ENCODE measurements at regions of chr16 and their contacts with region 1.

Region 1: GRCh38 chr16:30984669-30985400 is at the start of gene HSD3B7:
- DNase-seq: peak in 1 of 2 donors; percentile 90
- H3K4me3 ChIP-seq: peak within 1 kb of the TSS; percentile 39 to 51
- H3K27ac ChIP-seq: peak within 1 kb of the TSS; percentile 15
- H3K4me1 ChIP-seq: peaks cover 13% of the 10 kb centered on the region
- H3K27me3 ChIP-seq: no peaks in the 10 kb centered on the region
- CTCF ChIP-seq: peak; percentile 90 to 96 (median 93)
- POLR2A ChIP-seq: no peak
- total RNA-seq, gene HSD3B7: 14.5 TPM

Region 2: DNA sequence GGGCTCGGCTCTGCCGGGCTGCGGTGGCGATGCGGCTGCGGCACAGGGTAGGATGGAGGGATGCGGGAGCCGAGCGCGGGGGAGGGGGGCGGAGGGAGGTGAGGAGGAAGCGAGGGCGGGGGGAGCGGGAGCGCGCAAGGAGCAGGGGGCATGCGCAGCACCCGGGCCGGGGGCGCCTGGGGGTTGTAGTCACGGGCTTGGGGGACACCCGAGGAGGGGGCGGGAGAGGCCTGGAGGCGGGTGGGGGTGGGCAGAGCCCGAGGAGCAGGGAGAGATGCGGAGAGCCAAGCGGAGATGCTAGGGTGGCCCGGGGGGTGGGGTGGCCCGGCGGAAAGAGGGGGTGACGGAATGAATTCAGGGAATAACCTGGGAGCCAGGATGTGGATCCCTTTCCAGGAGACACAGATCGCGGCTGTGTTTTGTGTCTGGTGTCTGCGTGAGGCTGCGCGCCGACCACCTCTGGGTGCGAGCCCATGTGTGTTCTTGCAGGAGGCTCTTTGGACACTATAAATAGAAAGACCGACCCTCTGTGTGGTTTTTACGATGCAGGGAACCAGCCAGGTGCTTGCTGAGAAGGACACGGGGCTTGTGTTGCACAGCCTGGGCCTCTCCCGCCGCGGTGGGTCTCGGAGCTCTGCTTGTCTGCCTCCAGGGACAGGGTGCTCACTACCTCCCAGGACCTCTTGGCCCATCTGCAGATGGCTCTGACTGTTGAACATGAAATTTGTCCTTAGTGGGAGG is 25.9 kb after region 1 on chr16 and contains the start of gene STX1B:
- intact Hi-C with region 1: no loop called
- DNase-seq: no peak
- H3K4me3 ChIP-seq: peak within 1 kb of the TSS in 1 of 2 donors; percentile 44
- H3K27ac ChIP-seq: no peak within 1 kb of the TSS
- H3K4me1 ChIP-seq: peaks cover 5% of the 10 kb centered on the region
- H3K27me3 ChIP-seq: no peaks in the 10 kb centered on the region
- CTCF ChIP-seq: no peak
- POLR2A ChIP-seq: no peak
- total RNA-seq, gene STX1B: 4.7 TPM

Region 3: GRCh38 chr16:31073968-31074813 is 89.4 kb after region 1 on chr16 and contains the starts of genes ZNF646 and ZNF668:
- intact Hi-C with region 1: loop called (anchors 10 kb)
- DNase-seq: peak in 1 of 2 donors; percentile 97
- H3K4me3 ChIP-seq: peak within 1 kb of the TSS; percentile 65 to 97
- H3K27ac ChIP-seq: peak within 1 kb of the TSS; percentile 94
- H3K4me1 ChIP-seq: peaks cover 31% of the 10 kb centered on the region
- H3K27me3 ChIP-seq: no peaks in the 10 kb centered on the region
- CTCF ChIP-seq: no peak
- POLR2A ChIP-seq: peak in 1 of 2 donors; percentile 56
- total RNA-seq, gene ZNF646: 10.6 TPM
- total RNA-seq, gene ZNF668: 5.4 TPM

Region 4: DNA sequence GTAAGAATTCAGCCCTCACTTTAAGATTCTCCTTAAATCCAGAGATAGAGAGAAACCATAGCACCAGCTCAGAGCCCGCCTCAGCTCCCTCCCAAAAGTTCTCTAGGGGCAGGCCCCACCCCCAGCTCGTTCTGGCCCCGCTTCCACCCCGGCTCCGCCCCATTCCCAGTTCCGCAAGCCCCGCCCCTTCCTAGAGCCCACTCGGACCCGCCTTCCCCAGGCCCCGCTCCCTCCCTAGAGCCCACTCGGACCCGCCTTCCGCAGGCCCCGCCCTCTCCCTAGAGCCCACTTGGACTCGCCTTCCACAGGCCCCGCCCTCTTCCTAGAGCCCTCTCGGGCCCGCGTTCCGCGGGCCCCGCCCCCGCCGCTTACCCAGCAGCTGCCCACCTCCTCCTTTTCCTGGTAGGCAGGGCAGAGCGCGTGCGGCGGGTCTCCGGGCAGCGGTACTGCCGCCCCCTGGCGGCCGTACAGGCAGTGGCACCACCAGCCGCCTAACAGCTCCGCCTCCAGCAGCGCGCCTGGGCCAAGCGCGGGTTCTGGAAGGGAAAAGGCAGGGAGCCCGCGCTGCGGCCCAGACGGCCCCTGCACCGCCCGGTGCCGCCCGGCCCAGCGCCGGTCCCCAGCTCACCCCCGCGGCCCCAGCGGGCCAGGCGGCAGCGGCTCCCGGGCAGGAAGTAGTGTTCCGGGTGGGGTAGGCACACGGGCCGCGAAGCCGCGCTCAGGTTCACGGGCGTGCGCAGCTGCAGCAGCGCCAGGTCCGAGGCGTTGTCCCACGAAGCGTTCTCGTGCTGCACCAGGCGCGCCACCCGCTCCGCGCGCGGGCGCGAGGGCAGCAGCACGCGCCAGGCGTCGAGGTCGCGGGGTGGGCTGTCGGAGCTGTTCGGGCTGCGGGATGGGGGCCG is 157.5 kb after region 1 on chr16:
- intact Hi-C with region 1: loop called (anchors 5 kb)
- DNase-seq: peak; percentile 99 to 100
- H3K4me3 ChIP-seq: peak overlapping the region; percentile 51 to 70
- H3K27ac ChIP-seq: peak overlapping the region; percentile 87
- H3K4me1 ChIP-seq: peaks cover 39% of the 10 kb centered on the region
- H3K27me3 ChIP-seq: no peaks in the 10 kb centered on the region
- CTCF ChIP-seq: peak; percentile 96 to 97 (median 97)
- POLR2A ChIP-seq: peak in 1 of 2 donors; percentile 18

Region 5: GRCh38 chr16:31440516-31441184 is 455.8 kb after region 1 on chr16:
- intact Hi-C with region 1: loop called (anchors 5 kb)
- DNase-seq: no peak
- H3K4me3 ChIP-seq: no peak overlapping the region
- H3K27ac ChIP-seq: no peak overlapping the region
- H3K4me1 ChIP-seq: no peaks in the 10 kb centered on the region
- H3K27me3 ChIP-seq: no peaks in the 10 kb centered on the region
- CTCF ChIP-seq: no peak
- POLR2A ChIP-seq: no peak

Region 6: GRCh38 chr16:31868691-31869167 is 883.9 kb after region 1 on chr16:
- intact Hi-C with region 1: loop called (anchors 5 kb)
- DNase-seq: peak in 1 of 2 donors; percentile 70
- H3K4me3 ChIP-seq: no peak overlapping the region
- H3K27ac ChIP-seq: no peak overlapping the region
- H3K4me1 ChIP-seq: peaks cover 6% of the 10 kb centered on the region
- H3K27me3 ChIP-seq: no peaks in the 10 kb centered on the region
- CTCF ChIP-seq: peak; percentile 56 to 84 (median 79)
- POLR2A ChIP-seq: no peak